T-cell (primary cell): ENCODE measurements at regions of chr7 and their contacts with region 1.

Region 1: DNA sequence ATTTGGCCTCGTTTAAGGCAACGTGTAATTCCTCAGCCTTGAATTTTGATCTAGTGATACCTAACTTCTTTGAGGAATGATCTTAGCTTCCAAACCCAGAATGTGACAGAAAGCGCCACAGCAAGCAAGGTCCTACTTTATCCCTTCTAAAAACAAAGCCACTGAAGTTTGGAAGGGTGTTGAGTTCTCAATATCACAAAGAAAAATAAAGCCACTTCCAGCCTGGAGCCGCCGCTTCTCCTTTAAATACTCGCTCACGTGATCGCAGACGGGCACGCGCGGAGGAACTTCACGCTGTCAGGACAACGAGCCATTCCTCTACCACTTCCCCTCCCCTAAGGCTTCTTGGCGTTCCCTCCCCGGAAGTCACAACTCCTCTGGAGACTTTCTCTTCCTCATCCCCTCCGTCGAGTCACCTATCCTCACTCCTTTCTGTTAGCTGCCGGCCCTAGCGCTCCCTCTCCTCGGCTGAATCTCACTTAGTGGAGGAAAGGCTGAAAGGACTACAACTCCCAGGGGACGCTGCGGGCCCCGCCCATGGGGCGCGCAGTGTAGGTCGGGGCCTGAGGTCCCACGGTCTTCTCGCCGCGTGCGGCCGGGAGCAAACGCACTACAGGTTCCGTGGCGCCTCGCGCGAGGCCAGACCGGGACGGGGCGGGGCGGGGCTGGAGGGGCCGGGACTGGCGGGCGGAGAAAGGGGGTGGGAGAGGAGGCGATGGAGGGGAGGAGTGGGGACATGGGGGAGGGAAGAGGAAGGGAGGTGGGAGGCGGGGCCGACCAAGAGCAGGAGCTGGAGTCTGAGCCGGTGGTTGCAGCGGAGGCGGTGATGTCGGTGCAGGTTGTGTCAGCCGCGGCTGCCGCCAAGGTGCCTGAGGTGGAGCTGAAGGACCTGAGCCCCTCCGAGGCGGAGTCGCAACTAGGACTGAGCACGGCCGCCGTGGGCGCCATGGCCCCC is at the start of gene AHCYL2:
- DNase-seq: peak; percentile 93 to 99 (median 97)
- ATAC-seq: peak; percentile 91 to 93 (median 92)
- H3K4me3 ChIP-seq: peak within 1 kb of the TSS; percentile 71 to 84
- H3K4me3 Mint-ChIP-seq: peak within 1 kb of the TSS; percentile 80 to 94 (median 92)
- H3K27ac ChIP-seq: peak within 1 kb of the TSS; percentile 83
- H3K27ac Mint-ChIP-seq: peak within 1 kb of the TSS; percentile 95 to 99
- H3K4me1 ChIP-seq: peaks cover 15 to 25% of the 10 kb centered on the region in 2 experiments
- H3K4me1 Mint-ChIP-seq: peaks cover 44 to 53% (median 46%) of the 10 kb centered on the region in 3 donors
- H3K27me3 ChIP-seq: no peaks in the 10 kb centered on the region
- H3K27me3 Mint-ChIP-seq: no peaks in the 10 kb centered on the region
- total RNA-seq, gene AHCYL2: 13.1 to 17.6 (median 15.9) TPM

Region 2: GRCh38 chr7:128742206-128742605 is 482.3 kb before region 1 on chr7:
- CTCF ChIA-PET with region 1: no interaction called
- POLR2A ChIA-PET with region 1: interaction called in 1 of 2 experiments, 15 read pairs
- DNase-seq: no peak
- ATAC-seq: no peak
- H3K4me3 ChIP-seq: no peak overlapping the region
- H3K4me3 Mint-ChIP-seq: no peak overlapping the region
- H3K27ac ChIP-seq: no peak overlapping the region
- H3K27ac Mint-ChIP-seq: no peak overlapping the region
- H3K4me1 ChIP-seq: peaks cover 20 to 23% of the 10 kb centered on the region in 2 experiments
- H3K4me1 Mint-ChIP-seq: peaks cover 49 to 62% (median 60%) of the 10 kb centered on the region in 3 donors
- H3K27me3 ChIP-seq: no peaks in the 10 kb centered on the region
- H3K27me3 Mint-ChIP-seq: no peaks in the 10 kb centered on the region

Region 3: DNA sequence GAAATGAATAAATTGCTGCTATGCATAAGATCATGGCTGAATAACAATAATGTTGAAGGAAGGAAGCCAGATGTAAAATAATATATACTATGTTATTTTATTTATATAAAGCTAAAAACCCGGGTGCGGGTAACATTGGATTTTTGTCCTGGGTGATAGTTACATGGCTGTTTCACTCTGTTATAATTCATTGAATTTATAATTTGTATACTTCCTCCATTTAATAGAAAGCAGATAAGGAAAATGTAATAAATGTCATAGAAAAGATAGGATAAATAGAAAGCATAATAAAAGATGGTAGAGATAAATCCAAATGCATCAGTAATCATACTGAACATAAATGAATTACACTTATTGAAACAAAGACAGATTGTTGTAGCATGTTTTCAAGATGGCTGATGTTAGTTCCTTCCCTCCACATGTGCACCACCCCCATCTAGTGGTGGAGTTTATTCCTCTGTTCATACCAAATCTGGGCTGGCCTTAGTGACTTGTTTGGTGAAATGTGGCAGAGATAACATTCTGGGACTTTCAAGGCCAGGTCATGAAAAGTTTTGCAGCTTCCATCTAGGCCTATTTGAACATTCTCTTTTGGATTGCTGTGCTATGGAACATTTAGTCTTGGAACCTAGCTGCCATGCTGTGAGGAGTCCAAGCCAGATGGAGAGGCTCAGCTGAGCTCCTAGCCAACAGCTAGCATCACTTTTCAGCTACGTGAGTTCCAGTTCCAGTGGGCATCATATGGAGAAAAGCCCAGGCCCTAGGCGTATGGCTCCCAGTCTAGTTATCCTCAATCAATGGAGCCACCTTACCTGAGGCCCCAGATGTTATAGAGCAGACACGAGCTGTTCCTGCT is 47.2 kb after region 1 on chr7:
- CTCF ChIA-PET with region 1: interaction called, 7 to 67 read pairs
- POLR2A ChIA-PET with region 1: interaction called in 1 of 2 experiments, 3 read pairs
- DNase-seq: peak in 34 of 35 experiments; percentile 16 to 86 (median 56)
- ATAC-seq: peak; percentile 91 to 99 (median 96)
- H3K4me3 ChIP-seq: no peak overlapping the region
- H3K4me3 Mint-ChIP-seq: peak overlapping the region; percentile 24 to 39 (median 26)
- H3K27ac ChIP-seq: no peak overlapping the region
- H3K27ac Mint-ChIP-seq: peak overlapping the region in 1 of 2 donors; percentile 6
- H3K4me1 ChIP-seq: no peaks in the 10 kb centered on the region
- H3K4me1 Mint-ChIP-seq: peaks cover 3 to 9% (median 8%) of the 10 kb centered on the region in 3 donors
- H3K27me3 ChIP-seq: no peaks in the 10 kb centered on the region
- H3K27me3 Mint-ChIP-seq: no peaks in the 10 kb centered on the region

Region 4: GRCh38 chr7:129468087-129468486 is 243.6 kb after region 1 on chr7:
- CTCF ChIA-PET with region 1: interaction called, 3 to 4 read pairs
- POLR2A ChIA-PET with region 1: interaction called in 1 of 2 experiments, 11 read pairs
- DNase-seq: no peak
- ATAC-seq: no peak
- H3K4me3 ChIP-seq: no peak overlapping the region
- H3K4me3 Mint-ChIP-seq: no peak overlapping the region
- H3K27ac ChIP-seq: no peak overlapping the region
- H3K27ac Mint-ChIP-seq: no peak overlapping the region
- H3K4me1 ChIP-seq: no peaks in the 10 kb centered on the region
- H3K4me1 Mint-ChIP-seq: no peaks in the 10 kb centered on the region
- H3K27me3 ChIP-seq: no peaks in the 10 kb centered on the region
- H3K27me3 Mint-ChIP-seq: no peaks in the 10 kb centered on the region

Region 5: DNA sequence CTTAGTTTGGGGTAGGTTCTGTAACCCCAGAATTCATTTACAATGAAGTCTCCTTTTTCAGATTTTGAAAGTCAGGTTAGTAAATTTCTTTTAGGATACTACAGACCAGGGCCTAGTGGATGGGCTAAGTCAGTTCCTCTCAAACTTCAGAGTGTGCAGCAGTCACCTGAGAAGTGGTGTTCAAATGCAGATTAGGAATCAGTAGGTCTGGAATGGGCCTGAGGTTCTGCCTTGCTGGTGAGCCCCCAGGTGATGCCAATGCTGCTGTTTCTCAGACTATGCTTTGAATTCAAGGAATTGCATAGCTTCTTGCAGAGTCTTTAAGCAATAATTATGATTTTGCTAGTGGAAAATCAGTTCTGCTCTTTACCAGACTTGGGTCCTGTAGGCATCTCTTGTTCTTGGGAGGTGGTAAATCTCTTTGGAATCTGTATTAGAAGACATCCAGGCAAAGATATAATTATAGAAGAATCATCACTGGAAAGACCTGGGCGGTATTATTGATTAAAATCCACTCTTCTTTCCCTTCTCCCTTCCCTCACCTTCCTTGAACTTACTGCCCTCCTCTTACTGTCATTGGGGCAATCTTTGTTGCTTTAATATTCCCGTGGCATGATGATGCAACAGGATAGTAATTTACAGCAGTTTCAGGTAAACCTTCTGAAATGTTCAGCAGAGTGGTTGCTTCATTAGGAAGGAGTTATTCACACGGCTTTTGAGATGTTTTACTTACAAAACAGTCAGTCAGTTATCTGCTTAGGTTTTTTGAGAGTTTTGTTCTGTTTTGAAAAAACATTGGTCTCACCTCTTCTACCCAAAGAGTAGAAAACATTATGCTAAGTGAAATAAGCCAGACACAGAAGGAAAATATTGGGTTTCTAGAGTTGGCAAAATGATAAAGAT is 474.2 kb after region 1 on chr7:
- CTCF ChIA-PET with region 1: no interaction called
- POLR2A ChIA-PET with region 1: no interaction called
- DNase-seq: no peak
- ATAC-seq: no peak
- H3K4me3 ChIP-seq: no peak overlapping the region
- H3K4me3 Mint-ChIP-seq: no peak overlapping the region
- H3K27ac ChIP-seq: no peak overlapping the region
- H3K27ac Mint-ChIP-seq: no peak overlapping the region
- H3K4me1 ChIP-seq: no peaks in the 10 kb centered on the region
- H3K4me1 Mint-ChIP-seq: peaks cover under 1 to 9% (median 2%) of the 10 kb centered on the region in 3 donors
- H3K27me3 ChIP-seq: no peaks in the 10 kb centered on the region
- H3K27me3 Mint-ChIP-seq: no peaks in the 10 kb centered on the region

Region 6: GRCh38 chr7:129877146-129877792 is 652.7 kb after region 1 on chr7:
- CTCF ChIA-PET with region 1: no interaction called
- POLR2A ChIA-PET with region 1: interaction called in 1 of 2 experiments, 25 read pairs
- DNase-seq: no peak
- ATAC-seq: no peak
- H3K4me3 ChIP-seq: no peak overlapping the region
- H3K4me3 Mint-ChIP-seq: no peak overlapping the region
- H3K27ac ChIP-seq: no peak overlapping the region
- H3K27ac Mint-ChIP-seq: peak overlapping the region in 1 of 2 donors; percentile 63
- H3K4me1 ChIP-seq: peaks cover 4 to 7% of the 10 kb centered on the region in 2 experiments
- H3K4me1 Mint-ChIP-seq: peaks cover 48 to 74% (median 56%) of the 10 kb centered on the region in 3 donors
- H3K27me3 ChIP-seq: no peaks in the 10 kb centered on the region
- H3K27me3 Mint-ChIP-seq: no peaks in the 10 kb centered on the region